Gastrocnemius medialis (tissue), 4 donors: ENCODE measurements at regions of chr17 and their contacts with region 1.

Region 1: DNA sequence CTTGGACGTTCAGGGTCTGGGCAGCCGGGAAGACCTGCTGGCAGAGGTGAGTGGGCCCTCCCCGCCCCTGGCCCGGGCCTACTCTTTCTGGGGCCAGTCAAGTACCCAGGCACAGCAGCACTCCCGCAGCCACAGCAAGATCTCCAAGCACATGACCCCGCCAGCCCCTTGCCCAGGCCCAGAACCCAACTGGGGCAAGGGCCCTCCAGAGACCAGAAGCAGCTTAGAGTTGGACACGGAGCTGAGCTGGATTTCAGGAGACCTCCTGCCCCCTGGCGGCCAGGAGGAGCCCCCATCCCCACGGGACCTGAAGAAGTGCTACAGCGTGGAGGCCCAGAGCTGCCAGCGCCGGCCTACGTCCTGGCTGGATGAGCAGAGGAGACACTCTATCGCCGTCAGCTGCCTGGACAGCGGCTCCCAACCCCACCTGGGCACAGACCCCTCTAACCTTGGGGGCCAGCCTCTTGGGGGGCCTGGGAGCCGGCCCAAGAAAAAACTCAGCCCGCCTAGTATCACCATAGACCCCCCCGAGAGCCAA is 8.6 kb upstream of the ABCC3 start:
- DNase-seq: peak; percentile 16 to 64
- ATAC-seq: peak; percentile 79 to 88
- H3K4me3 ChIP-seq: no peak overlapping the region
- H3K27ac ChIP-seq: no peak overlapping the region
- H3K4me1 ChIP-seq: no peaks in the 10 kb centered on the region
- H3K27me3 ChIP-seq: peaks cover 0 to 13% (median 7%) of the 10 kb centered on the region in 3 donors
- CTCF ChIP-seq: peak; percentile 34 to 82 (median 79)
- POLR2A ChIP-seq: no peak

Region 2: DNA sequence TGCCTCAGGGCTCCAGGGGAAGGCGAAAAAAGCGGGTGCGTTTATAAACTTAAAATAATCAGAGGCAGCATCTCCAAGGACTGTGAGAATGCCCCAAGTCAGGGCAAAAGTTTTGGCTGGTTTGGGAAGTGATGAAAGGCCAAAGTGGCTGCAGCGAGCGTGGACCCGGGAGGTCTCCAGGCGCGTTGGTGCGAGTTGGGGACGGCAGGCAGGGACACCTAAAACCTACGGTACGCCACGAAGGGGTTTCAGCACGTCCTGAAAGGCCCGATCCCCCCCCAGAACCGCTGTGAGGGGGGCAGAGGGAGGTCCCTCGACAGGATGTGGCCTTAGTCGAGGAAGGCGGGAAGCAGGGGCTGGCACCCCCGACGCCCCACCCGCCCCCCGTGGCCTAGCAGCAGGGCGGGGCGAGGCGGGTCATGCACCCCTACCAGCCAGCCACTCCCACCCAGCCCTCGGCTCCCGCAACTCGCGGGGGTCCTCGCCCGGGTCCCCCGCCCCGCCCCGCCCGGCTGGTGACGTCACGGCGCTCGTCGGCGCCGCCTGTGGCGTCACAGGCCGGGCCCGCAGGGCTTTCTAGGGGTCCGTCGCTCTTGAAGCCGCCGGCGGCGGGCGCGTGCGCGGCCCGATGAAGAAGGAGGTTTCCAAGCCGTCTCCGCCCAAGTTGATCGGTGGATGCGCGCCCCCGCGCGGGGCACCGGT is 118.1 kb before region 1 on chr17 and contains the start of gene MYCBPAP:
- in situ Hi-C with region 1: no loop called
- intact Hi-C with region 1: no loop called
- DNase-seq: peak; percentile 42 to 64
- ATAC-seq: peak; percentile 67 to 68
- H3K4me3 ChIP-seq: peak within 1 kb of the TSS; percentile 50 to 85 (median 64)
- H3K27ac ChIP-seq: peak within 1 kb of the TSS; percentile 17 to 64 (median 57)
- H3K4me1 ChIP-seq: peaks cover 0 to 3% of the 10 kb centered on the region in 2 donors
- H3K27me3 ChIP-seq: no peaks in the 10 kb centered on the region
- CTCF ChIP-seq: peak in 1 of 5 experiments; percentile 34
- POLR2A ChIP-seq: peak in 1 of 2 donors; percentile 14
- total RNA-seq, gene MYCBPAP: not detected

Region 3: GRCh38 chr17:50575581-50576210 is 50.4 kb before region 1 on chr17:
- in situ Hi-C with region 1: no loop called
- intact Hi-C with region 1: no loop called
- DNase-seq: no peak
- ATAC-seq: no peak
- H3K4me3 ChIP-seq: no peak overlapping the region
- H3K27ac ChIP-seq: no peak overlapping the region
- H3K4me1 ChIP-seq: no peaks in the 10 kb centered on the region
- H3K27me3 ChIP-seq: no peaks in the 10 kb centered on the region
- CTCF ChIP-seq: no peak
- POLR2A ChIP-seq: no peak

Region 4: DNA sequence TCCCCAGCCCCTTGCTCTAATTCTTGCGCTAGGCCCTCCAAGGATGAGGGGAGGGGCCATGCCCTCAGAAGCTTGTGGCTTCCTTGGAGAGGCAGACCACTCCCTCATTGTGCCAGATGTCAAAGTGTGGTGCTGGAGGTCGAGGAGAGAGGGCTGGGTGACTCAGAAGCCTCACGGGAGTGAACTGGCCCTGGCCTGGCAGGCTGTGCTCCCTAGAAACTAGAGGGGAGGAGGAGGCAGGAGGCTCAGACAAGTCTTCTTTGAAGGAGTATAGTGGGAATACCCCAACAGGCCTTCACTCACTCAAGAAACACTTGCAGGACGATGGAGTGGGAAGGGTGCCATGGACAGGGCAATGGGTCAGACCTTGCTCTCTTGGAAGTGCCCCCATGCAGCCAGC is 63.1 kb after region 1 on chr17:
- in situ Hi-C with region 1: loop called in 2 of 4 experiments (anchors 10 kb)
- intact Hi-C with region 1: loop called (anchors 2 kb)
- DNase-seq: no peak
- ATAC-seq: no peak
- H3K4me3 ChIP-seq: no peak overlapping the region
- H3K27ac ChIP-seq: no peak overlapping the region
- H3K4me1 ChIP-seq: peaks cover 11 to 20% of the 10 kb centered on the region in 2 donors
- H3K27me3 ChIP-seq: no peaks in the 10 kb centered on the region
- CTCF ChIP-seq: no peak
- POLR2A ChIP-seq: no peak